GM10248 (cell line): ENCODE measurements at regions of chr19 and their contacts with region 1.

Region 1: DNA sequence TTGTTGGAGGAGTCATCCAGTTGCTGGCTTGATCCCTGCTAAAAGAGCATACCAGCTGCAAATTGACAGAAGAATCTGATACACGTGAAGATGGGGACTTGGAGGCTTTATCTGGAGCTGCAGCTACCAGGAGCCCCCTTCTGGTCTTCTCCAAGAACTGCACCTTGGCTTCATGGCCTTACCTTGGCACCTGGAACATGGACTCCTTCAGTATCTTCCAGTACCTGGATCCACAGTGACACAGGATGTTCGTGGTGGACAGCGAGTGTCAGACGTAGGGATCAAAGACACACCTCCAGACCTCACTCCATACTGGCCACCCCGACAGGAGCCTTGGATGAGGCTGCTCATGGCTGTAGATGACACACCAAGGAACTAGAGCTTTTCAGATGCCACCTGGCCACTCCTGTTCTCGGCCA is 9.9 kb upstream of the ACSBG2 start:
- DNase-seq: peak; percentile 69
- CTCF ChIP-seq: peak; percentile 85

Region 2: GRCh38 chr19:5987077-5987818 is 138.3 kb before region 1 on chr19:
- CTCF ChIA-PET with region 1: interaction called, 14 read pairs
- POLR2A ChIA-PET with region 1: no interaction called
- DNase-seq: peak; percentile 79
- CTCF ChIP-seq: peak; percentile 94

Region 3: DNA sequence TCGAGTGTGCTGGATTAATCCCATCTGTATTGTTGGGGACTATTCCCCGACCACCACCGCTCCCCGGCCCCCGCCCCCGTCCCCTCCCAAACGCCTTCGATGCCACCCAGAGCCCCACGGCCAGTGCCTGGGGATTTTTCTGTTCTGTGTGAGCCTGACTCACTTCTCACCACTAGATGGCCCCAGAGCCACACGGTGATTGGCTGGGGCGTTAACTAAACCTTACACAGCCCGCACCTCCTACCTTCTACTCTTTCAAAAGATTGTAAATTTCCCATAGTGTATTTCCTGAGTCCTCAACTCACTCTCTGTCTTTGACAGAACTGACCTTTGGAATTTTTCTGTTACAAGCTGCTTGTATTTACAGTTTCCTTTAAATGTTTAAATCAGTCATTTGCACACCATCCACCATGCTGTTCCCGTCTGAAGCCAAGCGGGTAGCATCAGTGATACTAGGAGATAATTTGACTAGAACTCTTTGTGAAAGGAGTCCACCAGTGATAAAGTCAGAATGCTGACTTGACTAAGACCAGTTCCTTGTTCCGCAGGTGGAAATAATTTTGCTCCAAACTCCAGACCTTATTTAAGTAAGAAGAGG is 76.7 kb before region 1 on chr19:
- CTCF ChIA-PET with region 1: interaction called, 103 read pairs
- POLR2A ChIA-PET with region 1: no interaction called
- DNase-seq: peak; percentile 89
- CTCF ChIP-seq: peak; percentile 93

Region 4: GRCh38 chr19:6060600-6061375 is 64.8 kb before region 1 on chr19:
- CTCF ChIA-PET with region 1: interaction called, 22 read pairs
- POLR2A ChIA-PET with region 1: no interaction called
- DNase-seq: no peak
- CTCF ChIP-seq: no peak

Region 5: DNA sequence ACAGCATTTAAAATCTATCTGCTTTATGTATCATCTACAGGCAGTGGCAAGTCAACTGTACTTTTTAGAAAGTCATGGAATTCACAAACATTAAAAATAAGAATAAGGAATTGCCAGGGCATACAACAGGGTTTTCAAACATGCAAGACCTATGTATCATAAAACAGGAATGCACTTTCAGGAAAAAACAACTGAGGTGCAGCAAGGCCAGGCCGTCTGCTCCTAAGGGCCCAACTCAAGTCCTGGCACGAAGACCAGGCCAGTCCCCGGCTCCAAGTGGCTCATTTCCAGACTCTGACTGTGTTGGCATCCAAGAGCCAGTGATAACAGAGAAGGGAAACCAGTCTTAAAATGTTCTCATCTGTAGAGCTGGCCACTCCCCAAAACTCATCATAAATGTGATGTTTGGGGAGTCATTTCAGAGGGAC is 22.3 kb before region 1 on chr19:
- CTCF ChIA-PET with region 1: interaction called, 21 read pairs
- POLR2A ChIA-PET with region 1: no interaction called
- DNase-seq: no peak
- CTCF ChIP-seq: no peak

Region 6: GRCh38 chr19:6297202-6297601 is 171.6 kb after region 1 on chr19:
- CTCF ChIA-PET with region 1: interaction called, 24 read pairs
- POLR2A ChIA-PET with region 1: no interaction called
- DNase-seq: no peak
- CTCF ChIP-seq: no peak